ENCODE measurements at regions of chr6 and their contacts with region 1.

Region 1: DNA sequence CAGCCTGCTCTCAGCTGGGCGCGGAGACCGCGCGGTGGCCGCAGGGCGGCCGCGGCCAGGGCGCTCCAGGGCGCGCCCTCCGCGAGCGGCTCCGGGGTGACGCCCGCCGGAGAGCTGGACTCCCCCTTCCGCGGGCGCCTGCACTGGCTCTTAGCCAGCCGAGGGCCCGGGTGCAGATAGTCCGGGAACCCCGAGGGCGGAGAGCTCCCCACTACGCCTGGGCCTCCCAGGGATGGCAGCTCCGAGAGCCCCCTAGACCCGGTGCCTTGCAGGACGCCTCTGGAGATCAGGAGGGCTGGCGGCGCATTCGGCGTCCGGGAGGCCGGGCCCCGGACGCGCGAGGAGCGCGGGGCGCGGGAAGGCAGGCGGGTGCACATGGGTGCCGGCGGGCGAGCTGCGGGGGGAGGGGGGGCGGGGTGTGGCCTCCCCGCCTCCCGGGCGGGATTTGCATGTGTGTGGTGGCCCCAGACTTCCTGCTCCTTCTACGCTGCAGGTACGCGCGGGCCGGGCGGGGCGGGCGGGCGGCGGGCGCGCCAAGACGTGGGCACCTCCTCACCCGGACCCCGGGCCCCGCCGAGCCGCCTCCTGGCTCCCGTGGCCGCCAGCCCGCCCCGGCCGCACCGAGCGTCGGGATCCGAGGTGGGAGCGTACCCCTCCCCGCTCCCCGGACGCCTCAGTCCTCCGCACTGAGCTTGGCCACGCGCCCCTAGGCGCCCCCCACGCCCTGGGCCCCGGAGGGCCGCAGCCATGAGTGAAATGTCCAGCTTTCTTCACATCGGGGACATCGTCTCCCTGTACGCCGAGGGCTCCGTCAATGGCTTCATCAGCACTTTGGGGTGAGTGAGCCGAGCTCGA is at the start of gene ITPR3:
- DNase-seq: peak; percentile 85
- H3K4me3 Mint-ChIP-seq: peak within 1 kb of the TSS; percentile 94
- H3K27ac Mint-ChIP-seq: peak within 1 kb of the TSS; percentile 83
- H3K4me1 Mint-ChIP-seq: peaks cover 43% of the 10 kb centered on the region
- H3K27me3 Mint-ChIP-seq: no peaks in the 10 kb centered on the region
- total RNA-seq, gene ITPR3: 41.6 to 45.6 TPM

Region 2: DNA sequence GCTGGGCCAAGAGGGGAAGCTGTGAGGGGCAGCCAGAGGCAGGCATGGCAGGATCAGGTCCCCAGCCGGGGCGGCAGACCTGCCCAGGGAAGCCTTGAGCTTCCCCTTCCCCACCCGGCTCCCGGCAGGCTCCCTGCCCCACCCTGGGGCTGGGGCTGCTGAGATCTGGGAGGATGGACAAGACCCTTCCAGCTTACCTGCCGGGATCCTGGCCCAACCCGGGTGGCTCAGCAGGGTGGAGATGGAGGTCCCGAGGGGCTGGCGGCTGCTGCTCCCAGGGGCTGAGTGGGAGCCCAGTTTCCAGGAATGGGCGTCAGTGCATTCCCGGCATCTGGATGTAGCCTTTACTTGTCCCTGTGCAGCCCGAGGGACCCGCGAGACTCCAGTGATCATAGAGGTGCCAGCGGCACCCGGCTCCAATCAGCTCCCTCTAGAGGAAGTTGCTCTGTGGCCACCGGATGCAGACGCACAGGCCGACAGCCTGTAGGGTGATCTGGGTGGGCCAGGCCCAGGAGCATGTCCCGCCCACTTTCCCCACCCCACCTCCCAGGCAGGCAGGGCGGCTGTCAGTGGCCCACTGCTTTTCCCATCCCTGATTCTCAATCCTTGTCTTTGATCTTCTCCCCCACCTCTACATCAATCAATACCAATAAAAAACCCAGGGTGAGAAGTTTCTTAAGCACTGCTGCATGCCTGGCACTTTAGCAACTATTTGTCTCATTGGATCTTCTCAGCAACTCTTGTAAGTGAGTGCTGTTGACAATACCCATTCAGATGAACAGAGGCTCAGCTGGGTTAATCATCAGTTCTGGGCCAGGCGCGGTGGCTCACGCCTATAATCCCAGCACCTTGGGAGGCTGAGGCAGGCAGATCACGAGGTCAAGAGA is 41.0 kb before region 1 on chr6 and contains the start of gene BAK1:
- CTCF ChIA-PET with region 1: interaction called, 9 read pairs
- POLR2A ChIA-PET with region 1: interaction called, 20 read pairs
- intact Hi-C with region 1: loop called (anchors 2 kb)
- DNase-seq: peak; percentile 93
- H3K4me3 Mint-ChIP-seq: peak within 1 kb of the TSS; percentile 96
- H3K27ac Mint-ChIP-seq: peak within 1 kb of the TSS; percentile 98
- H3K4me1 Mint-ChIP-seq: peaks cover 33% of the 10 kb centered on the region
- H3K27me3 Mint-ChIP-seq: no peaks in the 10 kb centered on the region
- total RNA-seq, gene BAK1: 56.3 to 57.7 TPM

Region 3: DNA sequence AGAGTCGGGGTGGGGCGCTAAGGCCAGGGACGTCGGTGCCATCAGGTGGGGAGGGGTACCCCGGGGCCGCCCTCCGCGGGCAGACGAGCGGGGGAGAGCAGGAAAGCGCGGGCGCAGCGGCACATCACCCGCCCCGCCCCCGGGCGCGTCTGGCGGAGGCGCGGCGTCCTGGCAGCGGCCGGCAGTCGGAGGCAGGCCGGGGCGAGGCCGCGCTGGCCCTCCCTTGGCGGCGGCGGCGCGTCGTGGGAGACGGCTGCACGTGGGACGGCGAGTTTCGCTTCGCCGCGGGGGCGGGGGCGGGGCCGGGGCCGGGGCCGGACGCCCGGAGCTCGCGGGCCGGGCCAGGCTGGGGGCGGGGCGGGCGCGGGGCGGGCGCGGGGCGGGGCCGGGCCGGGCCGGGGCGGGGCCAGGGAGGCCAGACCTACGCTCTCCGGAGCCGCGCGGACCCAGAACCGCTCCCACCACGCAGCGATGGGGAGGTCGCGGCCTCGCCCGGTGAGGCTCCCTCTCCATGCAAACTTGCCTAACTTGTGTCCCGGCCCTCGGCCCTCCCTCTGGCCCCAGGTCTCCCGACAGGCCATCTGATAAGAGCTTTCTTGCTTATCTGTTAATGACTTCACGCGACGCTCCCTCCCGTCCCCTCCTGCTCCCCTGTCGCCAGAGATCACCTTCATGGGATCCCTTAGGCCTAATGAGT is 12.5 kb after region 1 on chr6:
- CTCF ChIA-PET with region 1: interaction called, 10 read pairs
- POLR2A ChIA-PET with region 1: interaction called, 9 read pairs
- intact Hi-C with region 1: no loop called
- DNase-seq: peak; percentile 70
- H3K4me3 Mint-ChIP-seq: peak overlapping the region; percentile 59
- H3K27ac Mint-ChIP-seq: no peak overlapping the region
- H3K4me1 Mint-ChIP-seq: peaks cover 61% of the 10 kb centered on the region
- H3K27me3 Mint-ChIP-seq: no peaks in the 10 kb centered on the region

Region 4: DNA sequence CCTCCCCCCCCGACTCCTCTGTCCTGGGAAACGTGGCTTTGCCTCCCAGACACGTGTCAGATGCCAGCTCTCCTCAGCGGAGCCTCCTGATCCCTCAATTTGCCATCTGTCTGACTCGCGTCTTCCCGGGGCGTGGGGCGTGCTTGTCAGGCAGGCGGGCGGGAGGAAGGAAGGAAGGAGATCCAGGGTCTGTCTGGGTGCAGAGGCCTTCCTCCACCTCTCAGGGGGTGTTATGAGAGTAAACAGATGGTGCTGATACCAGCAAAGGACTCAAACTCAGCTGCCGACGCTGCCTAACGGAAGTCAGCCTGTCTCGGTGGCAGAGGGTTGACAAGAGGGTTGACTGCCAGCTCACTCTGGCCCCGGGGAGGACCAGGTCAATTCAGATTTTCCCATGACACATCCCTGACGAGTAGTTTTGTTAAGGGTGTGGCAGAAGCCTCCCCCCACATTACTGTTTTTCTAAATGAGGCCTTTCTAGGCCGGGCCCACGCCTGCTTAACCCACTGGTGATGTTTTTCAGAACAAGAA is 73.4 kb after region 1 on chr6:
- CTCF ChIA-PET with region 1: no interaction called
- POLR2A ChIA-PET with region 1: interaction called, 10 read pairs
- intact Hi-C with region 1: loop called (anchors 2 kb)
- DNase-seq: peak; percentile 88
- H3K4me3 Mint-ChIP-seq: peak overlapping the region; percentile 32
- H3K27ac Mint-ChIP-seq: peak overlapping the region; percentile 97
- H3K4me1 Mint-ChIP-seq: peaks cover 74% of the 10 kb centered on the region
- H3K27me3 Mint-ChIP-seq: no peaks in the 10 kb centered on the region

Region 5: DNA sequence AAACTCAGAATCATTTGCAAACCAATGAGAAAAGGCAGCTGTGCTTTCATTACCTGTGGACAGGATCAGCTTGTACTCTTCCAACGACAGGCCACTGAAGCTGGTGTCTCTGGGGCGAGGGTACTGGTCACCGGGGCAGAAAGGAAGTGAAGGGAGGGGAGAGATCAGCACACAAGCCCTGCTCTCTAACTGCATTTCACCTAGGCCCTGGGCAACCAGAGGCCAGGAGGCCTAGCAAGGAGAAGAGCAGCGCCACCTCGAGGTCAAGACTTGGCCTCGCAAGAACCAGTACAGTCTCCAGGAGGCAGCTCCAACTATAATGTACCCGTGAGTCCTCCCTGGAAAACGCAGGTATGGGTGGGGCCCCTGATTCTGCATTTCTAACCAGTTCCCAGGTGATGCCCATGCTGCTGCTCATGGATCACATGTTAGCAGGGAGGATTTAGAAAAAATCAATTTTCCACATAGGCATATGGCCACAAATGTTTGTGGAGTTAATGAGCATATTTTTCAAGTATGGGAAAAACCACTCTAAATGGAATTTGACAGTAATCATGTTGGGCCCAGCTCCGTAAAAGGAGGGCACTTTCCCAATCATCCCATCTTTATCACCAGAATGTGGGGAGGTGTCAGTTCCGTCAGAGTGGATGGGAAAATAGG is 79.4 kb after region 1 on chr6:
- CTCF ChIA-PET with region 1: interaction called, 6 read pairs
- POLR2A ChIA-PET with region 1: interaction called, 10 read pairs
- intact Hi-C with region 1: loop called (anchors 2 kb)
- DNase-seq: peak; percentile 84
- H3K4me3 Mint-ChIP-seq: no peak overlapping the region
- H3K27ac Mint-ChIP-seq: peak overlapping the region; percentile 73
- H3K4me1 Mint-ChIP-seq: peaks cover 37% of the 10 kb centered on the region
- H3K27me3 Mint-ChIP-seq: no peaks in the 10 kb centered on the region